ENCODE measurements at regions of chr3 and their contacts with region 1.

Region 1: DNA sequence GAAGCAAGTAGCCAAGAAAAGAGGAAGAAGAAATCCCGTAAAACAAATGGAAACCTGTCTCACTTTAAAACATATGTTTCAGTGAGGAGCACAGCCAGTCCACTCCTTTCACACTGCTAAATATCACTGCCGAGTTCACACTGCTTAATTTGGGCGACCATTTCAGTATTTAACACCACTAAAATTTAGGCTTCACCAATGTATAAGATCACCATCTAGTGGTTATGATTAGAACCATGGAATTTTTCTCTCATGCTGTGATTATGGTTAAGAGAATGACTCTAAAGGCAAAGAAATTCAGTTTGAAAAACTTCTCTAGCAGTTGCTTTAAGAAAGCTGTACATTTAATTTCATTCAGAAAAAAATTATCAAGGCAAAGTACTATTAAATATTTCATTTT is 16.6 kb downstream of the SLC4A7 start:
- DNase-seq: peak in 2 of 4 experiments; percentile 15 to 18
- ATAC-seq: peak; percentile 58
- H3K4me3 ChIP-seq: no peak overlapping the region
- H3K27ac ChIP-seq: no peak overlapping the region
- H3K4me1 ChIP-seq: no peaks in the 10 kb centered on the region
- H3K27me3 ChIP-seq: no peaks in the 10 kb centered on the region
- CTCF ChIP-seq: peak in 2 of 3 experiments; percentile 29 to 37; a peak in 2 of 6 replicates
- EP300 ChIP-seq: no peak
- POLR2A ChIP-seq: no peak
- RAD21 ChIP-seq: peak; percentile 42 to 50

Region 2: DNA sequence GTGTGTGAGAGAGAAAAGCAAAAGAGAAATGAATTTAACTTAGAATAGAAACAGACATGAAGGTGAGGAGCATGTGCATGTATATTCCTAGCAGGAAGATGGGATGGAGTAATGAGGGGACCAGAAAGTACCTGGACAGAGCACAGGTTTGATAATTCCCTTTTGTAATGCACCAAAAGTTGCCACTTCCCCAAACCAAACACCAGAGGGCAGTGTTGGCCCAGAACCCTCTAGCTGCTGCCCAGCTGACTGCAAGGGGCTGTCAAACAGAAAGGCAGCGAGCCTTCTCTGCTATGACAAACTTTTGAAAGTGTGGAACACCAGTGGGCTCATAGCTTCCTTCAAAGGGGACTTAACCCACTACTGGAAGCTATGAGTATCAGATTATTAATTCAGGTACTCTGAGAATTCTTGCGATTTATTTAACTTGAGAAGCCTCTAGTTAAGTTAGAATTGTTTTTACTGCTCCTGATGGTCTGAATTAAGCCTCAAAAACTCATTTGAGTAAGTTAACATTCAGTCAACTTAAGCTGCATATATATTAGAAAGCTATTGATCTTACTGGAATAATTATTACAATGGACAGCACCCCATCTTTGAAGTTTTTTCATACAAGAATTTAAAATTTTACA is 333.3 kb before region 1 on chr3:
- CTCF ChIA-PET with region 1: no interaction called
- POLR2A ChIA-PET with region 1: no interaction called
- in situ Hi-C with region 1: no loop called
- intact Hi-C with region 1: loop called (anchors 5 kb)
- DNase-seq: peak; percentile 53 to 70 (median 58)
- ATAC-seq: peak; percentile 84
- H3K4me3 ChIP-seq: no peak overlapping the region
- H3K27ac ChIP-seq: no peak overlapping the region
- H3K4me1 ChIP-seq: no peaks in the 10 kb centered on the region
- H3K27me3 ChIP-seq: no peaks in the 10 kb centered on the region
- CTCF ChIP-seq: peak; percentile 80 to 83 (median 82)
- EP300 ChIP-seq: no peak
- POLR2A ChIP-seq: no peak
- RAD21 ChIP-seq: peak; percentile 67 to 80

Region 3: DNA sequence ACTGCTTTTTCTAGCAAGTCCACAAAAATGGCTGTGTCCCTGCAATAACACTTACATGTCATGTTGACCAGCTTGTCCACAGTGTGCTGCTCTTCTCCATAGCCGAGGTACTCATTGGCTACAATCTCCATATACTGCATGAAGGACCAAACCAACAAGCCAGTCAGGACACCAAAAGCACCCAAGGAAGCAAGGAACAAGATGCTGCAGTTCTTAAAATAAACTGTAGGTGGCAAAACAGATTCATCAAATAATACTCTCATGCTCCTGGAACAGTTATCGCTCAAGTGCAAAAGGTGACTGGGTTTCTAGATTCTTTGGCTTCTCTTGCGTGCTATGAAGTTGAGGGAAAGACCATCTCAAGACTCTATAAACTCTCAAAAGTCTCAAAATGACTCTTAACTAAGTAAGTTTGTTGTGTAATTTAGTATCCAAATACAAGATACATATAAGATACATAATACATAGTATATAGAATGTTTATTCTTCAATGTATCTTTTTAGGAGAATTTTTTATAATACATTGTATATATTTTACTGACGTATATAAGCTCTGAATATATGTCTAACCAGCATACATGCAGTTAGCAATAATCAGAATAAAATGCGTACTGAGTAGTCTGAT is 155.4 kb before region 1 on chr3:
- CTCF ChIA-PET with region 1: no interaction called
- POLR2A ChIA-PET with region 1: no interaction called
- in situ Hi-C with region 1: no loop called
- intact Hi-C with region 1: loop called (anchors 2 kb)
- DNase-seq: peak; percentile 25 to 53 (median 48)
- ATAC-seq: peak; percentile 74
- H3K4me3 ChIP-seq: no peak overlapping the region
- H3K27ac ChIP-seq: no peak overlapping the region
- H3K4me1 ChIP-seq: no peaks in the 10 kb centered on the region
- H3K27me3 ChIP-seq: no peaks in the 10 kb centered on the region
- CTCF ChIP-seq: peak; percentile 19 to 63 (median 55); a peak in 5 of 6 replicates
- EP300 ChIP-seq: no peak
- POLR2A ChIP-seq: no peak
- RAD21 ChIP-seq: peak; percentile 57 to 68

Region 4: GRCh38 chr3:27357665-27358258 is 109.8 kb before region 1 on chr3:
- CTCF ChIA-PET with region 1: no interaction called
- POLR2A ChIA-PET with region 1: interaction called, 4 read pairs
- in situ Hi-C with region 1: no loop called
- intact Hi-C with region 1: loop called (anchors 1 kb)
- DNase-seq: peak; percentile 17 to 46 (median 30)
- ATAC-seq: peak; percentile 86
- H3K4me3 ChIP-seq: no peak overlapping the region
- H3K27ac ChIP-seq: no peak overlapping the region
- H3K4me1 ChIP-seq: no peaks in the 10 kb centered on the region
- H3K27me3 ChIP-seq: no peaks in the 10 kb centered on the region
- CTCF ChIP-seq: peak; percentile 38 to 52 (median 45); a peak in 4 of 6 replicates
- EP300 ChIP-seq: no peak
- POLR2A ChIP-seq: no peak
- RAD21 ChIP-seq: peak; percentile 30 to 53

Measured in K562 (cell line).